PC-9 (cell line): ENCODE measurements at regions of chr5 and their contacts with region 1.

Region 1: GRCh38 chr5:160508780-160509361 is 87.2 kb downstream of the PTTG1 start:
- DNase-seq: peak; percentile 60
- H3K4me3 ChIP-seq: no peak overlapping the region
- H3K27ac ChIP-seq: no peak overlapping the region
- H3K4me1 ChIP-seq: no peaks in the 10 kb centered on the region
- H3K27me3 ChIP-seq: peaks cover 40% of the 10 kb centered on the region
- CTCF ChIP-seq: peak; percentile 92

Region 2: DNA sequence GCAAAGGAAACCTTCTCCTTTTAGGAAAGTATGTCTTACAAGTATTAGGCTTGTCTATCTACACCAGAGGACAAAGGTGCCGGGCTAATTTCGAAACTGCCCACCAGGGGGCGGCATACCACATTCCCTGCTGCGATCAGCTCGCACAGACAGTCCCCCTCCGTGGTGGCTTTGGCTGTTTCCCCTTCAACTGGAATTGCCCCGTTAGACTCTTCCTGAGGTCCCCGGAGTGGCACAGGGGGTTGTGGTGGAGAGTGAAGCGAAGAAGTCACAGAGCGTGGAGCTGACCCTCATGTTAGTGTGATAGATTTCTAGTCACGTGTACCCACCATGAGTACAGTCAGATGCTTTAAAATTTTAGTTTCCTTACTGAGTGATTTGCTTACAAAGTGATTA is 69.7 kb before region 1 on chr5:
- CTCF ChIA-PET with region 1: no interaction called
- POLR2A ChIA-PET with region 1: no interaction called
- intact Hi-C with region 1: loop called (anchors 2 kb)
- DNase-seq: peak; percentile 57 to 83
- H3K4me3 ChIP-seq: peak overlapping the region; percentile 61
- H3K27ac ChIP-seq: no peak overlapping the region
- H3K4me1 ChIP-seq: peaks cover 6% of the 10 kb centered on the region; the same call in 1 of the 2 replicates
- H3K27me3 ChIP-seq: no peaks in the 10 kb centered on the region
- CTCF ChIP-seq: peak; percentile 93

Region 3: DNA sequence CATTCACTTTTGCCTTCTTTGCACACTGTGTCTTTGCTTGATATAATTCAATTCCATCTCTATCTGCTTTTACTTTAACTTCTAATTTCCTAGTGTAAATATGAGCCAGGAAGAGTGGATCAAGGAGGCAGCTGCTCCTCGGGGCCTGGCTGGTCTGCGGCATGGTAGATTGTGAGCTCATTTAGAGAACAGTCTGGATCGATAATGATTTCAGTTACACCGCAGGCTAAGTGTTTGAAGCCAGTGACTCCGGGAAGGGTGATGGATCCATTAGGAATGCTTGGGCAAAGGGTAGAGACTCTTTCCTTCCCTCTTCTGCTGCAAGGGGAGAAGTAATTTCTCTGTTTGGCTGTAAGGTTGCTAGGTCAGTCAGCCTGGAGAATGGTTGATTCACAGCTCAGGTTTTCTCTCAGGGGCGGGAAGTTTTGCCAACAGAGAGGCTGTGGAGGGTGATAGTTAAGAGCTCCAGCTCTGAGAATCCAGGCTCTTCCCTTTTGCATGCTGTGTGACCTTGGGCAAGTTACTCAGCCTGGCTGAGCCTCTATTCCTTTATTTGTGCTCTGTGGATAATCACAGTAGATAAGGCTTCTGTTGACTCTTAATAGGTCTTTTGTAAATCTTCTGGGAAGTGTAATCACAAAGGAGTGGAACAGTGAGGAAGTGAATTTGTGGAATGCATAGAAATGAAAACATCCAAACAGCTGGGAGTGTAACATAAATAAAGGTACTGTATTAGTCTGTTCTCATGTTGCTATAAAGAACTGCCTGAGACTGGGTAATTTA is 11.9 kb after region 1 on chr5:
- CTCF ChIA-PET with region 1: no interaction called
- POLR2A ChIA-PET with region 1: no interaction called
- intact Hi-C with region 1: no loop called
- DNase-seq: no peak
- H3K4me3 ChIP-seq: no peak overlapping the region
- H3K27ac ChIP-seq: no peak overlapping the region
- H3K4me1 ChIP-seq: no peaks in the 10 kb centered on the region
- H3K27me3 ChIP-seq: peaks cover 30% of the 10 kb centered on the region
- CTCF ChIP-seq: no peak

Region 4: DNA sequence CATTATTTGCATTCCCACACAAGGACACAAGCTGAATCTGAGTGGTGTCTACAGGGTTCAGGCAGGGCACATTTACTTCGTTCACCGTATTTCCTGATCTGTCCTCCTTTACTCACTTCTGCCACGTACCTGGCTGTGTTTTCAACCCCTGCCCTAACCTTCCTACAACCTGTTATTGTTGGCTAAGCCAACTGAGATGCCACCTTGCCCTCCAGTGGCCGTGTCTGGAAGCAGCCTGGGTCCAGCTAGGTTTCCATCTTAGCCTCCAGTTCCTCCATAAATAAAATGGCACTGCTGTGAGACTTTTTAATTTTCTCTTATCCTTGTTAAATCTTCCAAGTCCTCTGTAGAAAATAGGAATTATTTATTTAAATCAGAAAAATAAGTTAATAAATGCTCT is 278.4 kb after region 1 on chr5:
- CTCF ChIA-PET with region 1: no interaction called
- POLR2A ChIA-PET with region 1: no interaction called
- intact Hi-C with region 1: loop called (anchors 1 kb)
- DNase-seq: peak in 1 of 2 experiments; percentile 11
- H3K4me3 ChIP-seq: no peak overlapping the region
- H3K27ac ChIP-seq: no peak overlapping the region
- H3K4me1 ChIP-seq: no peaks in the 10 kb centered on the region
- H3K27me3 ChIP-seq: no peaks in the 10 kb centered on the region
- CTCF ChIP-seq: peak; percentile 51; the same call in 1 of the 2 replicates

Region 5: DNA sequence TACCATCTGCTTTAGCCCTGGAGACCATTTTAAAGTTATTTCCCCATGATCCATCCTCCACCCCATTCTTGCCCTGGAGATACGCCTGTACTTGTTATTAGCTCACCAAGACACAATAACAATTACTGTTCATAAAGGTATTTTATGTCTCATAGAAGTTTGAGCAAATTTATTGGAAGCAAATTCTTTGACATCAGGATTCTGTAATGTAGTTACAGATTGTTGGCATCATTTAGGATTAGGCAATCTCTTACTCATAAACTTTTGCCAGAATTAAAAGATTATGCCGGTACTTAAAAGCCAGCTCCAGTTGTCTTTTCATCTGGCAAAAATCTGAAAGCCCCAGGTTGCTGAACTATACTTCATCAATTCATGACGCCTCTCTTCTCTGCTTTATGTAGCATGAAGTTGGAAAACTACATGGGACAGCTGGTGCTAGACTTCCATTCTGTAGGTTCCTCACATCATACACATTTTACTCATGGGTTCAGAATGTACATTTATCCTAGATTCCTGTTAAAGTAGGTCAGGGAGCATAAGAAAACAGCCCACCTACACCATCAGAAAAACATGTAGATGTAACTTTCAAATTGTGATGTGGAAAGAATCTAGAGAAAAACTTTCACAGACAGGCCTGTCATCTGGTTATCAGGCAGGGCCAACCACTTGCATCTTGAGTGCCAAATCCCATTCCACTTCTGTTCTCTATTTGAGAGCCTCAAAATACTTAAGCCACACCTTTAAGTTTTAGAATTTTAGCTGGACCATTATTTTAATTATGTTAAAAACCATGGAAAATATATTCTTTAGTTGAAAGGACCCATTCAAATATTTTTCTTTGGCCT is 329.1 kb after region 1 on chr5:
- CTCF ChIA-PET with region 1: no interaction called
- POLR2A ChIA-PET with region 1: no interaction called
- intact Hi-C with region 1: no loop called
- DNase-seq: no peak
- H3K4me3 ChIP-seq: no peak overlapping the region
- H3K27ac ChIP-seq: no peak overlapping the region
- H3K4me1 ChIP-seq: no peaks in the 10 kb centered on the region
- H3K27me3 ChIP-seq: no peaks in the 10 kb centered on the region
- CTCF ChIP-seq: no peak

Region 6: GRCh38 chr5:161745392-161745791 is 1236.5 kb after region 1 on chr5:
- CTCF ChIA-PET with region 1: no interaction called
- POLR2A ChIA-PET with region 1: interaction called, 10 read pairs
- intact Hi-C with region 1: no loop called
- DNase-seq: no peak
- H3K4me3 ChIP-seq: no peak overlapping the region
- H3K27ac ChIP-seq: no peak overlapping the region
- H3K4me1 ChIP-seq: no peaks in the 10 kb centered on the region
- H3K27me3 ChIP-seq: no peaks in the 10 kb centered on the region
- CTCF ChIP-seq: no peak